Activated CD4-positive, alpha-beta T cell treated with anti-CD3 and anti-CD28 coated beads for 36 hours (primary cell): ENCODE measurements at regions of chr10 and their contacts with region 1.

Region 1: DNA sequence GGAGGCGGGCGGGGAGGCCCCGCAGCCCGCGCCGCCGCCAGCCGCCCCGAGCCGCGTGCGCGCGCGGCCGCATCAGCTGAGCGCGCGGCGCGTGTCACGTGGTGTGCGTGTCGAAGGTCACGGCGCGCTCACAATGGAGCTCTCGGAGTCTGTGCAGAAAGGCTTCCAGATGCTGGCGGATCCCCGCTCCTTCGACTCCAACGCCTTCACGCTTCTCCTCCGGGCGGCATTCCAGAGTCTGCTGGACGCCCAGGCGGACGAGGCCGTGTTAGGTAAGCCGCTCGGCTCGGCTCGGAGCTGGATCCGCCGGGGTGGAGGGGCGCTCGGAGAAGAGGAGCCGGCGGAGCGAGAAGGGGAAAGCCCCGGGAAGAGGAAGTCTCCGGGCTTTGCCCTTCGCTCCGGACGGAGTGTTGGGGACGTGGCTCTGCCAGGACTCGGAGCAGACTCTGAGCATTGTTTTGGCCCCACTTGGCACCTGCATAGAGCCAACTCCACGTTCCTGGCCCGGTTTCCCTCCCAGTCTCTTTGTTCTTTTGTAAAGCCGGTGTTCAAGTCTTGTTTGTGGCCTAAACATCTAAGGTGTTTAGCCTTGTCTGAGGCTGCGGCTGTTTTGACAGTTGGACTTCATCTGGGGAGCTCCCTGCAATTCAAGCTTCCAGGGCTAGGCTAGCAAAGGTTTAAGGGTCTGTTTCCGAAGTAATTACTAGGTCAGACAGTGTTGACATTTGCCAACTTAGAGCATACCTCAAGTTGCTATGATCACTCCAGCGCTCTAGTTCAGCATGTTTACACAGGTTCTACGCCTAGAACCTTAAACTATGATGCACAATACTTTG is at the start of gene COMMD3:
- DNase-seq: peak; percentile 88
- ATAC-seq: peak; percentile 72
- H3K4me3 Mint-ChIP-seq: peak within 1 kb of the TSS; percentile 94
- H3K27ac Mint-ChIP-seq: peak within 1 kb of the TSS; percentile 97
- H3K4me1 Mint-ChIP-seq: peaks cover 38% of the 10 kb centered on the region
- H3K27me3 Mint-ChIP-seq: peaks cover 7% of the 10 kb centered on the region
- total RNA-seq, gene COMMD3: 53.8 to 77.1 TPM

Region 2: DNA sequence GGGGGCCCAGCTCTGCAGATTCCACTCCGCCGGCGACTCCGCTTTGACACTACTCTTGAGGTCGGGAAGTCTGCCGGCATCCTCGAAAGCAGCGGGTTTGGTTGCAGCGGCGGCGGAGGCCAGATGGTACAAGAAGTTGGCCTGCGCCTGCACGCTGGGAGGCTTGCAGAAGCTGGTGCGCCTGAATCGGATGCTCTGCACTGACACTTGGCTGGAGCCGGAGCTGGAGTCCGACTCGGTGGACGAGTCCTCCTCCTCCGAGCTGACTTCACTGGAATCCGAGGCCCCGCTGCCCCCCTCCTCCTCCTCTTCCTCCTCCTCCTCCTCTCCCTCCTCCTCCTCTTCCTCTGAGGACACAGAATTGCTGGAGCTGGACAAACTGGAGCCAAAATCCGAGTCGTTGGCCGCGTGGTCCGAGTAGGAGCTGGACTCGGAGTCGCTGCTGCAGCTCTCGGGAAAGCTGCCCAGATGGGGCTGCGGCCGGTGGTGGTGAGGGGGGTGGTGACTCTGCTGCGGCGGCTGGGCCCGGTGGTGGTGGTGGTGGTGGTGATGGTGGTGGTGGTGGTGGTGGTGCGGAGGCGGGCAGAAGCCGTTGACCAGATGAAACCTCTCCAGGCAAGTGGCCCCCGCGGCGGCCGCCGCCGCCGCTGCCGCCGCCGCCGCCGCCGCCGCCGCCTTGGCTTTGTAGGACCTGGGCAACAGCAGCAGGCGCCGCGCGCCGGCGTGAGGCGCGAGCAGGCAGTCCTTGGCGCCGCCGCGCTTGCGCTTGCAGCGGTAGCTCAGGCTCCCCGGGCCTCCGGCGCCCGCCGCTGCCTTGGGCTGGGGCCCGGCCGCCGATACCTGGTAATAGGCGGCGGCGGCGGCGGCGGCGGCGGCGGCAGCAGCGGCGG is 800.0 kb before region 1 on chr10:
- CTCF ChIA-PET with region 1: no interaction called
- POLR2A ChIA-PET with region 1: no interaction called
- intact Hi-C with region 1: loop called in 1 of 2 experiments (anchors 5 kb)
- DNase-seq: peak; percentile 75
- ATAC-seq: peak; percentile 71
- H3K4me3 Mint-ChIP-seq: peak overlapping the region; percentile 78
- H3K27ac Mint-ChIP-seq: no peak overlapping the region
- H3K4me1 Mint-ChIP-seq: peaks cover 34% of the 10 kb centered on the region
- H3K27me3 Mint-ChIP-seq: peaks cover 68% of the 10 kb centered on the region

Region 3: GRCh38 chr10:21533467-21534279 is 782.8 kb before region 1 on chr10 and contains the start of gene MLLT10:
- CTCF ChIA-PET with region 1: no interaction called
- POLR2A ChIA-PET with region 1: no interaction called
- intact Hi-C with region 1: loop called in 1 of 2 experiments (anchors 5 kb)
- DNase-seq: peak; percentile 95
- ATAC-seq: peak; percentile 87
- H3K4me3 Mint-ChIP-seq: peak within 1 kb of the TSS; percentile 95
- H3K27ac Mint-ChIP-seq: peak within 1 kb of the TSS; percentile 98
- H3K4me1 Mint-ChIP-seq: peaks cover 18% of the 10 kb centered on the region
- H3K27me3 Mint-ChIP-seq: no peaks in the 10 kb centered on the region
- total RNA-seq, gene MLLT10: 33.8 to 34.1 TPM

Region 4: DNA sequence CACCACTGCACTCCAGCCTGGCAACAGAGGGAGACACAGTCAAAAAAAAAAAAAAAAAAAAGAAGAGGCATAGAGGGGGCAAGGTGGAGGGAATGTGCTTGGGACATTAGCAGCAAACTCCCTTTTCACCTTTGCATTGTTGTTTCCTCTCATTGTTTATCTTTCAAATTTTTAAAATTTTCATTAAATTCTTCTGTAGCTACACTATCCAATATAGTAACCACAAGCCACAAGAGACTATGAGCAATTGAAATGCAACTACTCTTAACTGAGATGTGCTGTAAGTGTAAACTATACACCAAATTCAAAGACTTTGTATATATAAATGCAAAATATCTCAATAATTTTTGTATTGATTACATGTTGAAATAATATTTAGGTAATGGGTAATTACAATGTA is 142.1 kb before region 1 on chr10:
- CTCF ChIA-PET with region 1: no interaction called
- POLR2A ChIA-PET with region 1: no interaction called
- intact Hi-C with region 1: no loop called
- DNase-seq: no peak
- ATAC-seq: no peak
- H3K4me3 Mint-ChIP-seq: no peak overlapping the region
- H3K27ac Mint-ChIP-seq: no peak overlapping the region
- H3K4me1 Mint-ChIP-seq: peaks cover 5% of the 10 kb centered on the region
- H3K27me3 Mint-ChIP-seq: peaks cover 16% of the 10 kb centered on the region

Region 5: GRCh38 chr10:22335173-22336123 is 18.9 kb after region 1 on chr10:
- CTCF ChIA-PET with region 1: interaction called, 4 read pairs
- POLR2A ChIA-PET with region 1: interaction called, 14 read pairs
- intact Hi-C with region 1: loop called (anchors 1 to 2 kb)
- DNase-seq: peak; percentile 82
- ATAC-seq: peak; percentile 67
- H3K4me3 Mint-ChIP-seq: peak overlapping the region; percentile 67
- H3K27ac Mint-ChIP-seq: peak overlapping the region; percentile 85
- H3K4me1 Mint-ChIP-seq: peaks cover 40% of the 10 kb centered on the region
- H3K27me3 Mint-ChIP-seq: peaks cover 39% of the 10 kb centered on the region

Region 6: GRCh38 chr10:22340362-22341189 is 24.1 kb after region 1 on chr10:
- CTCF ChIA-PET with region 1: interaction called, 4 read pairs
- POLR2A ChIA-PET with region 1: interaction called, 14 read pairs
- intact Hi-C with region 1: loop called in 1 of 2 experiments (anchors 1 kb)
- DNase-seq: peak; percentile 72
- ATAC-seq: peak; percentile 48
- H3K4me3 Mint-ChIP-seq: peak overlapping the region; percentile 78
- H3K27ac Mint-ChIP-seq: peak overlapping the region; percentile 89
- H3K4me1 Mint-ChIP-seq: peaks cover 34% of the 10 kb centered on the region
- H3K27me3 Mint-ChIP-seq: peaks cover 58% of the 10 kb centered on the region

Region 7: DNA sequence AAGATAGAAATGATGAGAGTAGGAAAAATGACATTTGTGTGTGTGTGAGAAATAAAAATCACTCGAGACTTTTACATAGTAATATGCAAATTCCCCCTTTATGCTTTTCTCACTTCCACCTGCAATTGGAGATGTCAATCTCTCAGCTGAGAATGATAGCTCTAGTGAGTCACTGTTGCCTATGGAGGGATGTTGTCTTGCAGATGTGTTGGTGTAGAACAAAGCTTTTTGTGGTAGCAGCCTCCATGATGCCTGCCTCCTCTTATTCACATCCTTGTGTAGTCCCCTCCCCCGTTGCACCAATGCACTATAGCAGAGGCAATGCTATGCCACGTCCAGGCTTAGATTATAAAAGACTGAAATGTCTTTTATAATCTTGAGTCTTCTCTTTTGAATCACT is 62.6 kb after region 1 on chr10:
- CTCF ChIA-PET with region 1: no interaction called
- POLR2A ChIA-PET with region 1: no interaction called
- intact Hi-C with region 1: no loop called
- DNase-seq: peak; percentile 81
- ATAC-seq: peak; percentile 98
- H3K4me3 Mint-ChIP-seq: no peak overlapping the region
- H3K27ac Mint-ChIP-seq: peak overlapping the region; percentile 75
- H3K4me1 Mint-ChIP-seq: peaks cover 14% of the 10 kb centered on the region
- H3K27me3 Mint-ChIP-seq: peaks cover 2% of the 10 kb centered on the region